ENCODE measurements at regions of chr3 and their contacts with region 1.

Region 1: GRCh38 chr3:189841473-189842210 is 210.5 kb downstream of the TP63 start:
- DNase-seq: peak; percentile 79
- ATAC-seq: peak; percentile 59; the same call in 1 of the 2 replicates
- H3K4me3 ChIP-seq: no peak overlapping the region
- H3K27ac ChIP-seq: peak overlapping the region; percentile 61
- H3K4me1 ChIP-seq: peaks cover 24% of the 10 kb centered on the region
- H3K27me3 ChIP-seq: no peaks in the 10 kb centered on the region
- CTCF ChIP-seq: no peak

Region 2: GRCh38 chr3:189908646-189909045 is 67.0 kb after region 1 on chr3:
- CTCF ChIA-PET with region 1: no interaction called
- POLR2A ChIA-PET with region 1: interaction called, 3 read pairs
- intact Hi-C with region 1: loop called (anchors 5 kb)
- DNase-seq: peak; percentile 97
- ATAC-seq: peak; percentile 85
- H3K4me3 ChIP-seq: peak overlapping the region; percentile 13; the same call in 1 of the 2 replicates
- H3K27ac ChIP-seq: peak overlapping the region; percentile 90
- H3K4me1 ChIP-seq: peaks cover 42% of the 10 kb centered on the region
- H3K27me3 ChIP-seq: no peaks in the 10 kb centered on the region
- CTCF ChIP-seq: no peak

Measured in PC-3 (cell line).